Caco-2 (cell line): ENCODE measurements at regions of chr11 and their contacts with region 1.

Region 1: DNA sequence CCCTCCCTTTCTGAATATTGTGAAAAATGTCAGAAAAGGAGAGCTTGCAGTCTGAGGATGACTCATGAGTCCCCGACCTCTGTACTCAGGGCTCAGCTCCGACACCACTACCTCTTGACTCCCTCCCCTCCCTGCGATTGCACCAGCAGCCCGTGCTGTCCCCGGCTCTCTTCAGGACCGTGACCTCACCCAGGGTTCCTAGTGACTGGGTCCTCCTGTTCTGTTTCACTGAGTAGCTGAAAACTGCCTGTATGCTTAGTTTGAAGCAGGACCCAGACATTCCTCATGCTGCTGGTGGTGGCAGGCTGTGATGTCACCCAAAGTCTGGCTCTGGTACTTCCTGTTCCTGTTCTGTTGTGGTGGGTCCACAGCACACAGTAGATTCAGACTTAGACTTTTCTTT is 11.7 kb downstream of the PHRF1 start:
- DNase-seq: peak; percentile 91 to 93
- H3K4me3 ChIP-seq: no peak overlapping the region
- H3K4me3 Mint-ChIP-seq: peak overlapping the region; percentile 5
- H3K27ac Mint-ChIP-seq: peak overlapping the region; percentile 82
- H3K4me1 ChIP-seq: peaks cover 25% of the 10 kb centered on the region
- H3K4me1 Mint-ChIP-seq: peaks cover 29% of the 10 kb centered on the region
- H3K27me3 ChIP-seq: no peaks in the 10 kb centered on the region
- H3K27me3 Mint-ChIP-seq: no peaks in the 10 kb centered on the region
- CTCF ChIP-seq: no peak

Region 2: GRCh38 chr11:494761-495536 is 93.0 kb before region 1 on chr11:
- CTCF ChIA-PET with region 1: no interaction called
- POLR2A ChIA-PET with region 1: no interaction called
- intact Hi-C with region 1: no loop called
- DNase-seq: no peak
- H3K4me3 ChIP-seq: no peak overlapping the region
- H3K4me3 Mint-ChIP-seq: no peak overlapping the region
- H3K27ac Mint-ChIP-seq: peak overlapping the region; percentile 71
- H3K4me1 ChIP-seq: no peaks in the 10 kb centered on the region
- H3K4me1 Mint-ChIP-seq: no peaks in the 10 kb centered on the region
- H3K27me3 ChIP-seq: no peaks in the 10 kb centered on the region
- H3K27me3 Mint-ChIP-seq: no peaks in the 10 kb centered on the region
- CTCF ChIP-seq: no peak

Region 3: GRCh38 chr11:575996-576768 is 11.8 kb before region 1 on chr11 and contains the start of gene PHRF1:
- CTCF ChIA-PET with region 1: interaction called, 5 read pairs
- POLR2A ChIA-PET with region 1: interaction called, 16 read pairs
- intact Hi-C with region 1: no loop called
- DNase-seq: peak; percentile 95 to 97
- H3K4me3 ChIP-seq: peak within 1 kb of the TSS; percentile 100
- H3K4me3 Mint-ChIP-seq: peak within 1 kb of the TSS; percentile 78
- H3K27ac Mint-ChIP-seq: peak within 1 kb of the TSS; percentile 97
- H3K4me1 ChIP-seq: peaks cover 36% of the 10 kb centered on the region
- H3K4me1 Mint-ChIP-seq: peaks cover 22% of the 10 kb centered on the region
- H3K27me3 ChIP-seq: no peaks in the 10 kb centered on the region
- H3K27me3 Mint-ChIP-seq: no peaks in the 10 kb centered on the region
- CTCF ChIP-seq: no peak
- total RNA-seq, gene PHRF1: 43.9 and 46.8 TPM in 2 replicates

Region 4: GRCh38 chr11:636452-637235 is 48.7 kb after region 1 on chr11:
- CTCF ChIA-PET with region 1: no interaction called
- POLR2A ChIA-PET with region 1: interaction called, 17 read pairs
- intact Hi-C with region 1: no loop called
- DNase-seq: no peak
- H3K4me3 ChIP-seq: no peak overlapping the region
- H3K4me3 Mint-ChIP-seq: no peak overlapping the region
- H3K27ac Mint-ChIP-seq: no peak overlapping the region
- H3K4me1 ChIP-seq: no peaks in the 10 kb centered on the region
- H3K4me1 Mint-ChIP-seq: no peaks in the 10 kb centered on the region
- H3K27me3 ChIP-seq: no peaks in the 10 kb centered on the region
- H3K27me3 Mint-ChIP-seq: no peaks in the 10 kb centered on the region
- CTCF ChIP-seq: no peak